Activated CD4-positive, alpha-beta memory T cell treated with anti-CD3 and anti-CD28 coated beads, Interleukin-2, amount 10 ng/mL, durations not matched to agents 7 days and 5 days (primary cell): ENCODE measurements at regions of chr3 and their contacts with region 1.

Region 1: GRCh38 chr3:12484198-12484974 is at the start of gene TSEN2:
- DNase-seq: peak; percentile 97
- H3K4me3 Mint-ChIP-seq: peak within 1 kb of the TSS; percentile 86
- H3K27ac Mint-ChIP-seq: peak within 1 kb of the TSS; percentile 91
- H3K4me1 Mint-ChIP-seq: peaks cover 43% of the 10 kb centered on the region
- H3K27me3 Mint-ChIP-seq: no peaks in the 10 kb centered on the region
- total RNA-seq, gene TSEN2: 7.5 to 8.0 TPM

Region 2: DNA sequence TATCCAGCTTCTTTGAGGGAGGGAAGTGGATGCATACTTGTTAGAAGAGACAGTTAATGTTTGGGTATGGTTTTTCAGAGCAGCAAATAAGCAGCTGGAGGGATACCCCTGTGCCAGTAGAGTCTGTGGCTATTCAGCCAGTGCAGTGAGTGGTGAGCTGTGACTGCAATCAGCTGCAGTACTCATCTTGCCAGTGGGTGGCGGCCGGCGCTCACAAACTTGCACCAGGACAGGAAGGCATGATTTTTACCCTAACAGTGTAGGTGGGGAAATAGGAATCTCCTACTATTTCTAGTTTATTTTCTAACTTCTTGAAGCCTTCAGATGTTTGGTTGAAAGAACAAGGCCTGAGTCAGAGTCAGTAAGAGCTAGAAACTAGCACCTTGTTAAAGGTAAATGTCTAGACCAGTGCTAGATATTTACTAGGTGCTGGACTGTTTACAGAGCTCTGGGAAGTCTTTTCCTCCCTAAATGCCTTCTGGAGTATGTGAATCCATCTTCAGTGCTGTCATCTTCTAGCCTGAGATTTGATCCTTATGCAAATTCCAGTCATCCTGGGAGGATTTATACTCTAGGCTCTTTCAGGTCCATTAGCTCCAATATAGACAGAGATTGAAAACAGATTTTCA is 349.2 kb before region 1 on chr3:
- CTCF ChIA-PET with region 1: interaction called, 129 read pairs
- POLR2A ChIA-PET with region 1: interaction called, 4 read pairs
- DNase-seq: peak; percentile 71
- H3K4me3 Mint-ChIP-seq: no peak overlapping the region
- H3K27ac Mint-ChIP-seq: no peak overlapping the region
- H3K4me1 Mint-ChIP-seq: peaks cover 2% of the 10 kb centered on the region
- H3K27me3 Mint-ChIP-seq: peaks cover 30% of the 10 kb centered on the region

Region 3: GRCh38 chr3:12193485-12194165 is 290.8 kb before region 1 on chr3:
- CTCF ChIA-PET with region 1: interaction called, 15 read pairs
- POLR2A ChIA-PET with region 1: no interaction called
- DNase-seq: peak; percentile 55
- H3K4me3 Mint-ChIP-seq: no peak overlapping the region
- H3K27ac Mint-ChIP-seq: peak overlapping the region; percentile 78
- H3K4me1 Mint-ChIP-seq: peaks cover 52% of the 10 kb centered on the region
- H3K27me3 Mint-ChIP-seq: no peaks in the 10 kb centered on the region

Region 4: DNA sequence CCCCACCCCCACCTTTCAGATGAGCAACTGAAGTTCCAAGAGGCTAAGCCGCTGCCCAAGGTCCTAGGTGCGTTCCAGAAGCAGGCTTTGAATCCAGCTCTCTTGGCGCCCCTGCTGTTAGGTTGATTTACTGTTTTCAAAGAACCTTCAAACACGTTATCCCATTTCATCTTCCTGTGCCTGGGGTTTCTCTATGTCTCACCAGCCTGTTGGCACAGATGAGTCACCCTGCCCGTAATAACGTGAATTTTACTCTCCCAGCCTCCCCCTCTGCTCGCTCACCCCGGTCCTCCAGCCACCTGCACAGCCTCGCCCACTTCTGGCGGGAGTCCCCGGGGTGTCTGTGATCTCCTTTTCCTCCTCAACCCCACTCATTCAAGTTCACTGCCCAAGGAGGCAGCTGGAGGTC is 13.1 kb before region 1 on chr3:
- CTCF ChIA-PET with region 1: interaction called, 15 read pairs
- POLR2A ChIA-PET with region 1: interaction called, 3 read pairs
- DNase-seq: peak; percentile 64
- H3K4me3 Mint-ChIP-seq: peak overlapping the region; percentile 8
- H3K27ac Mint-ChIP-seq: peak overlapping the region; percentile 69
- H3K4me1 Mint-ChIP-seq: peaks cover 45% of the 10 kb centered on the region
- H3K27me3 Mint-ChIP-seq: no peaks in the 10 kb centered on the region

Region 5: DNA sequence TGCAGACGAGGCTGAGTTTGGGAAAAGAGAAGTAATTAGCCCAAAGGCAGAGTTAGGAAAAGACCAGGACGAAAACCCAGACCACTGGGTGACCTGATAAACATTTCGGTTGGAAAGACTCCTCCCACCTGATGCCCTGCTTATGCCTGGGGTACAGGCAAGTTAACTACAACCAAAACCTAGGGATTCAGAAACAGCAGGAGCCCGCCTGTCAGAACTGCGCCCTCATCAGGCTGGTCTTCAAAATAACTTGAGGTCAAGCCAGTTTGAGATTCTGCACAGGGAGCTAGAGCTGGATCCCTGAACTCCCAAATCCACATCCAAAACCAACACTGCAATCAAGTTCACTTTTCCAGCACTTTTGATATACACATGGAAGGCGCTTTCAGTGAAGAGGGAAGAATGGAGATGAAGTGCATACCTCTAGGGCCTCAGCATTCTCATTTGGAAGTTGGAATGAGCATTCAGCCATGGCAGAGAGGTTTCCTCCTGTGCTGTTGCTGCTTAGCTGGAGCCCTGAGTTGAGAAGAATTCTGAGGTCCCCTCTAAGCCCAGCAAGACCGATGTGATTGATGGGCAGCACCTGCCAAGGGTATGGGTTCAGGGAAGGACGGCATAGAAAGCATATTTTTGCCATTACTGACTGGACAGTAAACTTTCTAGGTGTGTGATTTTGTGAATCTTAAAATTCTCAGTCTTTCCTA is 11.5 kb after region 1 on chr3:
- CTCF ChIA-PET with region 1: interaction called, 6 read pairs
- POLR2A ChIA-PET with region 1: interaction called, 11 read pairs
- DNase-seq: no peak
- H3K4me3 Mint-ChIP-seq: no peak overlapping the region
- H3K27ac Mint-ChIP-seq: no peak overlapping the region
- H3K4me1 Mint-ChIP-seq: no peaks in the 10 kb centered on the region
- H3K27me3 Mint-ChIP-seq: no peaks in the 10 kb centered on the region

Region 6: DNA sequence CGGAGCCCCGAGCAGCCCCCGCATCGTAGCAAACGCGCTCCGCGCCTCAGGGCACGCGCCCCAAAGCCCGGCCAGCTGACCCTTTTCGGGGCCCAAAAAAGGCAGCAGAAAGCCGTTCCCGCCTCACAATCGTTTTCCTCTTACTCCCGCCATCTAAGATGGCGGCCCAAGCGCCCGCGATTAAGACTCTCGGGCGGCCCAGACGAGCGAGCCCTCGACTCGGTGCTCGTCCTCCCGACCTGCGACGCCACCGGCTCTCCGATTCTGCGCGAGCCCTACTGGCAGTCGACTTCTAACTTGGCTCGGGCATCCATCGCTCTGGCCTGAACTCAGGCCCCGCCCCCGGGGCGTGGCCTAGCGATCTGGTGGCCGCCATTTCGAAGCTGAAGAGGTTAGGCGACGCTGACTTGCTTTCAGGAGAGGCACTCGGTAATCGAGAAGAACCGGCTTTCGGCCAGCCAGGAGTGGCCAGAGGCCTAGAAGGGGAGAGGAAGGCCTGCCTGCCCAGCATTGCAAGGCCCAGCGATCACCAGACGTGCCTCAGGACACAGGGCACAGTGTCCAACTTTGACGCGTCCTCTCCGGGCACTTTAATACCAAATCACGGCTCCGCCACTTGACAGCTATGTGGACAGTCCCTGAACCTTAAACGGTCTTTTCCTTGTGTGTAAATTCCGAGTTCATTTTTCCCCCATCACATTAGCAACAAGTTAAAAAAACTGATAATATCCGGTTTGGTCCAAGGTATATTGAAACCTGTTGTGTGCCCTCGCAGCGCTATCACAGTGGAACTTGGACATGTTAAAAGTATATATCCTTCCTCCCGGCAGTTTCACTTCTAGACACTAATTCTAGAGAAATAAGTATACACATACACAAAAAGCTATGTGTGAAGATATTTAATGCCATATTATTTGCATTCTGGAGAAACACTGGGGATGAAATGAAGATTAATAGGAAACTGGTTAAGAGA is 179.8 kb after region 1 on chr3 and contains the start of gene RAF1:
- CTCF ChIA-PET with region 1: interaction called, 5 read pairs
- POLR2A ChIA-PET with region 1: interaction called, 14 read pairs
- DNase-seq: peak; percentile 98
- H3K4me3 Mint-ChIP-seq: peak within 1 kb of the TSS; percentile 83
- H3K27ac Mint-ChIP-seq: peak within 1 kb of the TSS; percentile 99
- H3K4me1 Mint-ChIP-seq: peaks cover 28% of the 10 kb centered on the region
- H3K27me3 Mint-ChIP-seq: no peaks in the 10 kb centered on the region
- total RNA-seq, gene RAF1: 83.2 to 86.0 TPM